GM12878 (cell line): ENCODE measurements at regions of chr20 and their contacts with region 1.

Region 1: DNA sequence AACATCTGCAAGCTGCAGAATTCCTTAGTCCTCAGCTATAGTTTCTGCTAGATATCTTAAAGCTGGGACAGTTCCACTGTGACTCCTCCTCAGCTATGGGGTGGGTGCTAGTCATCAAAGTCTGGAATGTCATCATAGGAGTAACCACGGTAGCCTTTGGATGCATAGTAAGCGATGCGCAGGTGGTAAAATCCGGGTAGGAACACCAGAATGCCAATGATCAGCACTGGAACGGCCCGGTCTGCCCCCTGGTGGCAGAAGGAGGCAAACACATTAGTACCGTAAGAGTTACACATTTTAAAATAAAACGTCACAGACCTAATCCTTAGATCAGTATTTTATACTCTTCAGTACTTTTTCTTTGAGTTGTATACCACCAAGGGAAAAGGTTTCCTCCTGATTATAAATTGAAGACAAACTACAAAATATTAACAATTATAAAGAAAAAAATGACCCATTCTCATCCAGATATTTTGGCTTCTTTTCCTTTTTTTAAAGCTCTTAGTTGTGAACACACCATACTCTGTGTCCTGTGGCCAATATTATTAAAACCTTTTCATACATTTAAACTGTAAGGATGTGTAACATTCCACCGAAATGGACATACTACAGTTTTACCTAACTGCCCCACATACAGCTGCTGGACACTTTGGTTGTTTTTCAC is 18.9 kb downstream of the PCNA start:
- DNase-seq: no peak
- ATAC-seq: peak; percentile 94
- H3K4me3 ChIP-seq: no peak overlapping the region
- H3K27ac ChIP-seq: no peak overlapping the region
- H3K4me1 ChIP-seq: no peaks in the 10 kb centered on the region
- H3K27me3 ChIP-seq: no peaks in the 10 kb centered on the region
- CTCF ChIP-seq: peak; percentile 72 to 85 (median 81)
- EP300 ChIP-seq: no peak
- POLR2A ChIP-seq: no peak
- RAD21 ChIP-seq: peak; percentile 85

Region 2: GRCh38 chr20:4740774-4741431 is 359.9 kb before region 1 on chr20:
- CTCF ChIA-PET with region 1: interaction called, 16 read pairs
- POLR2A ChIA-PET with region 1: no interaction called
- RAD21 ChIA-PET with region 1: no interaction called
- SMC1A ChIA-PET with region 1: no interaction called
- in situ Hi-C with region 1: no loop called
- intact Hi-C with region 1: no loop called
- DNase-seq: no peak
- ATAC-seq: peak; percentile 83
- H3K4me3 ChIP-seq: no peak overlapping the region
- H3K27ac ChIP-seq: no peak overlapping the region
- H3K4me1 ChIP-seq: no peaks in the 10 kb centered on the region
- H3K27me3 ChIP-seq: no peaks in the 10 kb centered on the region; a peak in 2 of 4 replicates
- CTCF ChIP-seq: peak; percentile 70 to 86 (median 79)
- EP300 ChIP-seq: no peak
- POLR2A ChIP-seq: no peak
- RAD21 ChIP-seq: peak; percentile 50

Region 3: DNA sequence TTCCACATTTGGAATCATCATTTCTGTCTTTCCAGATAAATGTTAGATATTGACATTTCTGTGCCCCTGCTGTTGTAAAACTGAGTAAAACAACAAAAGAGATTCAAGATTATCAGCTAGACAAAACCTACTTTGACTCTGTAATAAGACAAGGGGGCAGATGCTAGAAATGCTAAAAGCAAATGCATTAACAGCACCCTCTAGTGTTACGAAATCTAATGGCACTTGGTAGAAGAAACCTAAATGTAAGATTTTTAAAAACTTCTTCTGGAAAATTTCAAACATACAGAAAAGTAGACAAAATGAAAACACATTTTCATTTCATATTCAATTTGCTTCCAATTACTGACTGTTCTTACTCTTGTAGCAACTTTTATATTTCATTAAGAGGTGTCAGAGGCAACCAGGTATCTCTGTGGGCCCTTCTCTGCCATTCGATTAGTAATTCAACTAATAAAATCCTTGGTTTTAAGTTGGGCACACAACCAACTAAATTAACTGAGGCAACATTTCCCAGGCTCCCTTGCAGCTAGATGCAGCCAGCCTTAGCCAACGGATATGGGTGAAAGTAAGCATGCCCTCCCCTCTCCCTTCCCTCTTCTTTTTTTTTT is 144.5 kb before region 1 on chr20:
- CTCF ChIA-PET with region 1: interaction called, 86 read pairs
- POLR2A ChIA-PET with region 1: interaction called, 3 read pairs
- RAD21 ChIA-PET with region 1: interaction called, 54 read pairs
- SMC1A ChIA-PET with region 1: interaction called, 58 read pairs
- in situ Hi-C with region 1: no loop called
- intact Hi-C with region 1: loop called (anchors 2 kb)
- DNase-seq: no peak
- ATAC-seq: peak; percentile 75
- H3K4me3 ChIP-seq: no peak overlapping the region
- H3K27ac ChIP-seq: no peak overlapping the region
- H3K4me1 ChIP-seq: peaks cover 9% of the 10 kb centered on the region
- H3K27me3 ChIP-seq: no peaks in the 10 kb centered on the region
- CTCF ChIP-seq: peak; percentile 66 to 84 (median 82)
- EP300 ChIP-seq: no peak
- POLR2A ChIP-seq: no peak
- RAD21 ChIP-seq: peak; percentile 88

Region 4: GRCh38 chr20:5001174-5002076 is 99.4 kb before region 1 on chr20 and contains the start of gene SLC23A2:
- CTCF ChIA-PET with region 1: interaction called, 51 read pairs
- POLR2A ChIA-PET with region 1: interaction called, 3 read pairs
- RAD21 ChIA-PET with region 1: interaction called, 22 read pairs
- SMC1A ChIA-PET with region 1: interaction called, 46 read pairs
- in situ Hi-C with region 1: loop called (anchors 5 kb)
- intact Hi-C with region 1: loop called (anchors 2 kb)
- DNase-seq: no peak
- ATAC-seq: peak; percentile 59
- H3K4me3 ChIP-seq: peak within 1 kb of the TSS; percentile 94
- H3K27ac ChIP-seq: no peak within 1 kb of the TSS
- H3K4me1 ChIP-seq: peaks cover 11% of the 10 kb centered on the region
- H3K27me3 ChIP-seq: no peaks in the 10 kb centered on the region; a peak in 1 of 4 replicates
- CTCF ChIP-seq: no peak
- EP300 ChIP-seq: no peak
- POLR2A ChIP-seq: peak; percentile 68
- RAD21 ChIP-seq: no peak
- polyA plus RNA-seq, gene SLC23A2: 4.4 to 5.9 TPM

Region 5: DNA sequence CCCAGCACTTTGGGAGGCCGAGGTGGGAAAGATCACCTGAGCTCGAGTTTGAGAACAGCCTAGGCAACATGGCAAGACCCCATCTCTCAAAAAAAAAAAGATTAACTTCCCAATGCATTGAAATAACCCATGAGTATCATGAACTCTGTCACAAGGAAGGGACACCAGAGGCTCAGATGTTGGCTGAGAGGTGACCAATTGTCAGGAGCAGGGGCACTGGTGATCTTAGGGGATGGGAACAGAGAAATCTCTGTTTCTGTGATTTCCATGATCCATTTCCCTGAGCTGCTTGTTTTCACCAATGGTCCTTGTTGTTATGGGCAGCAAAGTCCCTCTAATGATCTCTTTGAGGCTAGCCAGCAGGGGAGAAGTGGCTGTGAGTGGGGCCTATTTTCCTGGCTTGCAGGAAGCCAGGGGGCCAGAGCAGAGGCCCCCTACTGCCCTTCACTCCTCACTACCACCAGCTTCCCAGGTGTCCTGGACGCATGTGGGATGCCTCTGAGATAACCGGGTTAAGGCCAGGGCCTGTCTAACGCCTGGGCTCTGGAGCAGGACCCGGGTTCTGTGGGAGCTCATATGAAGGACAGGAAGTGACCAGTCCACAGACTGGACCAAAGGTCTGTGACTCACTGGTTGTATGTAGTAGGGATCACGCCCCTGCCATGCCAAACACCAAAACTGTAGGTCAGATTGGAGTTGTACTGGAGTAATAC is 35.5 kb before region 1 on chr20:
- CTCF ChIA-PET with region 1: interaction called, 104 read pairs
- POLR2A ChIA-PET with region 1: no interaction called
- RAD21 ChIA-PET with region 1: interaction called, 6 read pairs
- SMC1A ChIA-PET with region 1: interaction called, 12 read pairs
- in situ Hi-C with region 1: no loop called
- intact Hi-C with region 1: no loop called
- DNase-seq: no peak
- ATAC-seq: no peak
- H3K4me3 ChIP-seq: no peak overlapping the region
- H3K27ac ChIP-seq: no peak overlapping the region
- H3K4me1 ChIP-seq: no peaks in the 10 kb centered on the region
- H3K27me3 ChIP-seq: peaks cover 0 to 4% of the 10 kb centered on the region in 2 experiments; a peak in 1 of 4 replicates
- CTCF ChIP-seq: no peak
- EP300 ChIP-seq: no peak
- POLR2A ChIP-seq: no peak
- RAD21 ChIP-seq: no peak

Region 6: GRCh38 chr20:5156675-5157448 is 56.0 kb after region 1 on chr20:
- CTCF ChIA-PET with region 1: no interaction called
- POLR2A ChIA-PET with region 1: no interaction called
- RAD21 ChIA-PET with region 1: no interaction called
- SMC1A ChIA-PET with region 1: no interaction called
- in situ Hi-C with region 1: no loop called
- intact Hi-C with region 1: no loop called
- DNase-seq: no peak
- ATAC-seq: no peak
- H3K4me3 ChIP-seq: no peak overlapping the region
- H3K27ac ChIP-seq: no peak overlapping the region
- H3K4me1 ChIP-seq: peaks cover 2% of the 10 kb centered on the region; the same call in 1 of the 2 replicates
- H3K27me3 ChIP-seq: no peaks in the 10 kb centered on the region
- CTCF ChIP-seq: no peak
- EP300 ChIP-seq: no peak
- POLR2A ChIP-seq: no peak
- RAD21 ChIP-seq: no peak

Region 7: DNA sequence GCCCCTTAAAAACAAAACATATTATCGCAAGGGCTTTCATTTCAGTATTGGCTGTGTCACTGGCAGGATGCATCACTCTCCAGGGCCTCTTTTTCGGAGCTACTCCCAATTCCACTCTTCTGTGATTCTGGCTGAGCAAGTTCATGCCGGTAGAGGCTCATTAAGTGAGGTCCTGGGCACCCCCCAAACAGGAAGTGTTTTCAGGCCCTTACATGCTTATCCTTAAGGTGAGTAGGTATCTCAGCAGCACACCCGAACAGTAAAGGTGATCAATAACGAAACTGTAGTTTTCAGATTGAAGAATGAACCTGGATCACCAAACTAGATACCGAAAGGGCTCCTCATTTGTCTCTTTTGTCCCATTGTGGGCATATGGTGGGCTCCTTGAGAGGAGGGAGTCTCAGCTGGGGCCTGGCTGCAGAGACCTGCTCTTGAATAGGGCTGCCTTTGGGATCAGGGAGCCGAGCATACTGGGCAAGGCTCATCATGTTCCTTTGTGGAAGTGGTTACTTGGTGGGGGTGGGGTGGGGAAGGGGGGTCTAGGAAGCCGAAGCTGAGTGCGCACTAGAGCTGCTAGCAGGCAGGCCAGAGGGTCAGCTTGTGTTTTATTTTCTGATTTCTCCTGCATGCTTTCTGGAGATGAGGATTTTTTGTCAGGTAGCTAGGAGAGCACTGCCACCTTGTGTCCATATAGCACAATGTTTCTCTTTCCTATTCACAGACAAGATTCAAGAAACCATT is 91.2 kb after region 1 on chr20:
- CTCF ChIA-PET with region 1: interaction called, 15 read pairs
- POLR2A ChIA-PET with region 1: no interaction called
- RAD21 ChIA-PET with region 1: interaction called, 8 read pairs
- SMC1A ChIA-PET with region 1: interaction called, 16 read pairs
- in situ Hi-C with region 1: no loop called
- intact Hi-C with region 1: no loop called
- DNase-seq: peak; percentile 61
- ATAC-seq: peak; percentile 79
- H3K4me3 ChIP-seq: peak overlapping the region; percentile 8; the same call in 1 of the 2 replicates
- H3K27ac ChIP-seq: peak overlapping the region; percentile 16
- H3K4me1 ChIP-seq: peaks cover 34% of the 10 kb centered on the region
- H3K27me3 ChIP-seq: no peaks in the 10 kb centered on the region
- CTCF ChIP-seq: peak; percentile 67 to 82 (median 80)
- EP300 ChIP-seq: no peak
- POLR2A ChIP-seq: no peak
- RAD21 ChIP-seq: peak; percentile 93

Region 8: GRCh38 chr20:5205348-5206210 is 104.8 kb after region 1 on chr20:
- CTCF ChIA-PET with region 1: no interaction called
- POLR2A ChIA-PET with region 1: no interaction called
- RAD21 ChIA-PET with region 1: no interaction called
- SMC1A ChIA-PET with region 1: no interaction called
- in situ Hi-C with region 1: no loop called
- intact Hi-C with region 1: no loop called
- DNase-seq: no peak
- ATAC-seq: peak; percentile 100
- H3K4me3 ChIP-seq: no peak overlapping the region
- H3K27ac ChIP-seq: no peak overlapping the region
- H3K4me1 ChIP-seq: no peaks in the 10 kb centered on the region
- H3K27me3 ChIP-seq: no peaks in the 10 kb centered on the region
- CTCF ChIP-seq: peak; percentile 88 to 89 (median 89)
- EP300 ChIP-seq: no peak
- POLR2A ChIP-seq: no peak
- RAD21 ChIP-seq: peak; percentile 76